ENCODE measurements at regions of chr7 and their contacts with region 1.

Region 1: DNA sequence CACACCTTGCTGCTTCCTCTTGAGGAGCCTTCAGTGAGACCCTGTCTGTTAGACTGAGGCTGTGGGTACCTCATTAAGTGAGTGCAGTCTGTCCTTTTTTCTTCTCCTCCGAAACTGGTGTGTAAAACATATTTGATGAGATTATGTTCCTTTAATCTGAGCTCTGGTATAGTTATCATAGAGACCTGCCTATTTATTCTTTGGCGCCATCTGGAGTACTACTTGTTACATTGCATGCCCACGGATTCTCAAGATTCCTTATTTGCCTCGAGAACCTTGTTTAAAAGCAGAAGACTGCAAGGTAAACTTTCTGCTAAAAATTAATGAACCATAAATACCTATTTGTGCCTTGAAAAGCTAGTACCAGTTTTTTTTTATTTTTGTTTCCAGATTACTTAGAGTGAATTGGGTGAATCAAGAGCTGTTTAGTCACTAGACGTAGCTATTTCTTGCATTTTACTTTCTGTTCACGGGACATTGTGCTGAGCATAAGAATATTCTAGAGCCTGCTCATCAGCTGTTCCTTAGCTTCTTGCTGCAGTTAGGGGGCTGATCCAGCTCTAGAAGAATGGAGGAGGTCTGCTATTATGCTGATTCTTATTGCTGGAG is 16.9 kb upstream of the STMP1 start:
- DNase-seq: peak in 8 of 35 experiments; percentile 3 to 62 (median 13)
- ATAC-seq: peak; percentile 68 to 73 (median 70)
- H3K4me3 ChIP-seq: no peak overlapping the region
- H3K4me3 Mint-ChIP-seq: no peak overlapping the region
- H3K27ac ChIP-seq: no peak overlapping the region
- H3K27ac Mint-ChIP-seq: no peak overlapping the region
- H3K4me1 ChIP-seq: no peaks in the 10 kb centered on the region
- H3K4me1 Mint-ChIP-seq: peaks cover 0 to 8% (median 0%) of the 10 kb centered on the region in 3 donors
- H3K27me3 ChIP-seq: no peaks in the 10 kb centered on the region
- H3K27me3 Mint-ChIP-seq: no peaks in the 10 kb centered on the region

Region 2: GRCh38 chr7:135274495-135275268 is 370.7 kb before region 1 on chr7:
- CTCF ChIA-PET with region 1: interaction called, 6 to 55 read pairs
- POLR2A ChIA-PET with region 1: no interaction called
- DNase-seq: peak; percentile 8 to 78 (median 52)
- ATAC-seq: peak; percentile 63 to 76 (median 68)
- H3K4me3 ChIP-seq: no peak overlapping the region
- H3K4me3 Mint-ChIP-seq: no peak overlapping the region
- H3K27ac ChIP-seq: no peak overlapping the region
- H3K27ac Mint-ChIP-seq: no peak overlapping the region
- H3K4me1 ChIP-seq: peaks cover 0 to 3% of the 10 kb centered on the region in 2 experiments
- H3K4me1 Mint-ChIP-seq: peaks cover 0 to 3% (median 2%) of the 10 kb centered on the region in 3 donors
- H3K27me3 ChIP-seq: peaks cover 0 to 8% of the 10 kb centered on the region in 2 experiments
- H3K27me3 Mint-ChIP-seq: peaks cover 0 to 3% of the 10 kb centered on the region in 2 donors

Region 3: DNA sequence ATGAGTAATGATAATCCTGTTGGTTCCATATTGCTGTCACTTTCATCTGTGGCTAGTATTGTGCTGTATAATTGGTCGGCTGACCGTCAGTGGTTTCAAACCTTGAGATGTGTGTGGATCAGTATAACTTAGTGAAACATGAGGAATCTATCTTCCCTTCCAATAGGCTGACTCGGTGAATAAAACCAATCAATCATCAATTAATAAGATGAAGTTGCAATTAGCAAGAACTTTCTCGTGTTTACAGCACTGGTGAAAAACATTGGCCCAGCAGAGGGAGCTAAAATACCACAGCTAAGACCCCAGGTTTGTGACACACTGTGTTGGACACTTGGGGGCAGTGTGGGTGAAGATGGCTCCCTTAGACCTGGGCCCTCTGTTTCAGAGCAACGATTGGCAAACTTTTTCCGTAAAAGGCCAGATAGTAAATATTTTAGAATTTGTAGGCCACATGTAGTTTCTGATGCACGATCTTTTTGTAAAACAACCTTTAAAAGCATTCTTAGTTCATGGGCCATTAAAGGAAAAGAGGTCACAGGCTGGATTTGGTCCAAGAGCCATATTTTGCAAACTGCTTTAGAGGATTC is 363.9 kb before region 1 on chr7:
- CTCF ChIA-PET with region 1: interaction called, 11 to 55 read pairs
- POLR2A ChIA-PET with region 1: no interaction called
- DNase-seq: peak; percentile 36 to 89 (median 69)
- ATAC-seq: peak; percentile 92 to 100 (median 94)
- H3K4me3 ChIP-seq: no peak overlapping the region
- H3K4me3 Mint-ChIP-seq: no peak overlapping the region
- H3K27ac ChIP-seq: no peak overlapping the region
- H3K27ac Mint-ChIP-seq: peak overlapping the region in 1 of 2 donors; percentile 20
- H3K4me1 ChIP-seq: peaks cover 3 to 6% of the 10 kb centered on the region in 2 experiments
- H3K4me1 Mint-ChIP-seq: peaks cover 0 to 23% (median 21%) of the 10 kb centered on the region in 3 donors
- H3K27me3 ChIP-seq: peaks cover 0 to 2% of the 10 kb centered on the region in 2 experiments
- H3K27me3 Mint-ChIP-seq: peaks cover 8 to 12% of the 10 kb centered on the region in 2 donors

Region 4: GRCh38 chr7:135467207-135467711 is 178.1 kb before region 1 on chr7:
- CTCF ChIA-PET with region 1: no interaction called
- POLR2A ChIA-PET with region 1: no interaction called
- DNase-seq: no peak
- ATAC-seq: no peak
- H3K4me3 ChIP-seq: no peak overlapping the region
- H3K4me3 Mint-ChIP-seq: no peak overlapping the region
- H3K27ac ChIP-seq: no peak overlapping the region
- H3K27ac Mint-ChIP-seq: no peak overlapping the region
- H3K4me1 ChIP-seq: peaks cover 0 to 2% of the 10 kb centered on the region in 2 experiments
- H3K4me1 Mint-ChIP-seq: peaks cover 46 to 55% (median 48%) of the 10 kb centered on the region in 3 donors
- H3K27me3 ChIP-seq: no peaks in the 10 kb centered on the region
- H3K27me3 Mint-ChIP-seq: no peaks in the 10 kb centered on the region

Region 5: GRCh38 chr7:135662373-135663114 is 17.1 kb after region 1 on chr7 and contains the start of gene STMP1:
- CTCF ChIA-PET with region 1: interaction called, 13 read pairs
- POLR2A ChIA-PET with region 1: interaction called in 1 of 2 experiments, 3 read pairs
- DNase-seq: peak; percentile 85 to 98 (median 93)
- ATAC-seq: peak; percentile 97 to 98 (median 97)
- H3K4me3 ChIP-seq: peak within 1 kb of the TSS; percentile 88 to 93
- H3K4me3 Mint-ChIP-seq: peak within 1 kb of the TSS; percentile 90 to 97 (median 93)
- H3K27ac ChIP-seq: peak within 1 kb of the TSS; percentile 71
- H3K27ac Mint-ChIP-seq: peak within 1 kb of the TSS; percentile 81 to 91
- H3K4me1 ChIP-seq: peaks cover 0 to 19% of the 10 kb centered on the region in 2 experiments
- H3K4me1 Mint-ChIP-seq: peaks cover 45 to 47% (median 46%) of the 10 kb centered on the region in 3 donors
- H3K27me3 ChIP-seq: no peaks in the 10 kb centered on the region
- H3K27me3 Mint-ChIP-seq: no peaks in the 10 kb centered on the region
- total RNA-seq, gene STMP1: 15.2 to 23.0 (median 21.5) TPM

Region 6: GRCh38 chr7:135745703-135746312 is 100.4 kb after region 1 on chr7:
- CTCF ChIA-PET with region 1: no interaction called
- POLR2A ChIA-PET with region 1: no interaction called
- DNase-seq: no peak
- ATAC-seq: no peak
- H3K4me3 ChIP-seq: no peak overlapping the region
- H3K4me3 Mint-ChIP-seq: no peak overlapping the region
- H3K27ac ChIP-seq: no peak overlapping the region
- H3K27ac Mint-ChIP-seq: no peak overlapping the region
- H3K4me1 ChIP-seq: no peaks in the 10 kb centered on the region
- H3K4me1 Mint-ChIP-seq: no peaks in the 10 kb centered on the region
- H3K27me3 ChIP-seq: peaks cover 0 to 10% of the 10 kb centered on the region in 2 experiments
- H3K27me3 Mint-ChIP-seq: peaks cover 10 to 22% of the 10 kb centered on the region in 2 donors

Measured in T-cell (primary cell).